Activated CD4-positive, alpha-beta T cell treated with anti-CD3 and anti-CD28 coated beads for 36 hours (primary cell): ENCODE measurements at regions of chr19 and their contacts with region 1.

Region 1: DNA sequence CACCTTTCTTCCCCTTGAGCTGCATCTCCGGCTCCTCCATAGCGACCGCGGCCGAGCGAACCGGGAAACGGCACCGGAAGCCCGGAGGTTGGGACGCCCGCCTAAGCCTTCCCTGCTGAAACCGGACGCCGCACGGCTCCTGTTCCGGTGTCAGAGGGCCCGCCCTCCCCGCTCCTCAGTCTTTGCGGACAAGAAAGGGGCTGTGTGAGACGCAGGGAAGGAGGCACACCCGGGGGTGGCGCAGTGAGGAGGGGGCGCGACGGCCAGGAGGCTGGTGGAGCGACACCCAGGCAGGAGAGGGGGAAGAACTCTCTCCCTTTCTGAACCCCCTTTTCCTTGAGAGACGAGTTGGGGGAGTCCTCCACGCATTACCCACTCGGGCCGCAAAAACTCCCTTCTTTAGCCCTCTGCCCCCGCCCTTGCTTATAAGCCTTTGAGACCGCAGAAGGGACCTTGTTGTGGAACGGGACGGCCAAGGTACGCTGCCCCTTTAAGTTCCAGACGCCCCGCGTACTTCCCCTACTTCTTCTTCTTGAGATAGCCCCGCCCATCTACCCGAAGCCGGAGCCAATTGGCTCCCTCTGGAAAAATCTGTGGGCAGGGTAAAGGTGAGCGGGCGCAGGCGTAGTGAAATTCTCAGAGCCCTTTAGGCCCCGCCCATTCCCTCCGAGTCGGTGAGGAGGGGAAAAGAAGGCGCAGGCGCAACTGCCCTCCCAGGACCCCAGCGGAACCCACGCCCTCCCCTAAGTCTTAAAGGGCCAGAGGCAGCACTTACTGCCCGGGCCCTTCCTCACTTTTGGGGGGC is at the starts of genes BORCS8 and RFXANK:
- DNase-seq: peak; percentile 99
- ATAC-seq: peak; percentile 92
- H3K4me3 Mint-ChIP-seq: peak within 1 kb of the TSS; percentile 91
- H3K27ac Mint-ChIP-seq: peak within 1 kb of the TSS; percentile 94
- H3K4me1 Mint-ChIP-seq: peaks cover 41% of the 10 kb centered on the region
- H3K27me3 Mint-ChIP-seq: no peaks in the 10 kb centered on the region
- total RNA-seq, gene BORCS8: 19.5 to 25.3 TPM
- total RNA-seq, gene RFXANK: 56.2 to 68.5 TPM

Region 2: DNA sequence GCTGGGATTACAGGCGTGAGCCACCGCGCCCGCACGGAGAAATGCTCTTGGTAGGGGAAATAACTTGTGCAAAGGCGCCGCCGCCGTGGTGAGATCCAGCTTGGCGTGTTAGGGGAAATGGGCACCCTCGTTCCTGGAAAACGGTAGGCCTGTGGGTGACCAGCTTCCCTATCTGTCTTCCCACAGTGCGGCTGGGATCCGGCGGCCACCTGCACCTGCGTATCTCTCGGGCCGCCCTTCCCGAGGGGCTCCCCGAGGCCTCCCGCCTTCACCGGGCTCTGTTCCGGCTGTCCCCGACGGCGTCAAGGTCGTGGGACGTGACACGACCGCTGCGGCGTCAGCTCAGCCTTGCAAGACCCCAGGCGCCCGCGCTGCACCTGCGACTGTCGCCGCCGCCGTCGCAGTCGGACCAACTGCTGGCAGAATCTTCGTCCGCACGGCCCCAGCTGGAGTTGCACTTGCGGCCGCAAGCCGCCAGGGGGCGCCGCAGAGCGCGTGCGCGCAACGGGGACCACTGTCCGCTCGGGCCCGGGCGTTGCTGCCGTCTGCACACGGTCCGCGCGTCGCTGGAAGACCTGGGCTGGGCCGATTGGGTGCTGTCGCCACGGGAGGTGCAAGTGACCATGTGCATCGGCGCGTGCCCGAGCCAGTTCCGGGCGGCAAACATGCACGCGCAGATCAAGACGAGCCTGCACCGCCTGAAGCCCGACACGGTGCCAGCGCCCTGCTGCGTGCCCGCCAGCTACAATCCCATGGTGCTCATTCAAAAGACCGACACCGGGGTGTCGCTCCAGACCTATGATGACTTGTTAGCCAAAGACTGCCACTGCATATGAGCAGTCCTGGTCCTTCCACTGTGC is 804.0 kb before region 1 on chr19:
- CTCF ChIA-PET with region 1: no interaction called
- POLR2A ChIA-PET with region 1: interaction called, 10 read pairs
- intact Hi-C with region 1: no loop called
- DNase-seq: peak; percentile 88
- ATAC-seq: peak; percentile 86
- H3K4me3 Mint-ChIP-seq: peak overlapping the region; percentile 67
- H3K27ac Mint-ChIP-seq: no peak overlapping the region
- H3K4me1 Mint-ChIP-seq: peaks cover 4% of the 10 kb centered on the region
- H3K27me3 Mint-ChIP-seq: peaks cover 45% of the 10 kb centered on the region

Region 3: GRCh38 chr19:18795540-18795939 is 396.7 kb before region 1 on chr19:
- CTCF ChIA-PET with region 1: no interaction called
- POLR2A ChIA-PET with region 1: no interaction called
- intact Hi-C with region 1: no loop called
- DNase-seq: no peak
- ATAC-seq: peak; percentile 42
- H3K4me3 Mint-ChIP-seq: no peak overlapping the region
- H3K27ac Mint-ChIP-seq: no peak overlapping the region
- H3K4me1 Mint-ChIP-seq: peaks cover 2% of the 10 kb centered on the region
- H3K27me3 Mint-ChIP-seq: peaks cover 38% of the 10 kb centered on the region

Region 4: GRCh38 chr19:18846862-18847548 is 345.3 kb before region 1 on chr19:
- CTCF ChIA-PET with region 1: no interaction called
- POLR2A ChIA-PET with region 1: no interaction called
- intact Hi-C with region 1: no loop called
- DNase-seq: peak; percentile 84
- ATAC-seq: peak; percentile 63
- H3K4me3 Mint-ChIP-seq: no peak overlapping the region
- H3K27ac Mint-ChIP-seq: no peak overlapping the region
- H3K4me1 Mint-ChIP-seq: peaks cover 61% of the 10 kb centered on the region
- H3K27me3 Mint-ChIP-seq: no peaks in the 10 kb centered on the region

Region 5: DNA sequence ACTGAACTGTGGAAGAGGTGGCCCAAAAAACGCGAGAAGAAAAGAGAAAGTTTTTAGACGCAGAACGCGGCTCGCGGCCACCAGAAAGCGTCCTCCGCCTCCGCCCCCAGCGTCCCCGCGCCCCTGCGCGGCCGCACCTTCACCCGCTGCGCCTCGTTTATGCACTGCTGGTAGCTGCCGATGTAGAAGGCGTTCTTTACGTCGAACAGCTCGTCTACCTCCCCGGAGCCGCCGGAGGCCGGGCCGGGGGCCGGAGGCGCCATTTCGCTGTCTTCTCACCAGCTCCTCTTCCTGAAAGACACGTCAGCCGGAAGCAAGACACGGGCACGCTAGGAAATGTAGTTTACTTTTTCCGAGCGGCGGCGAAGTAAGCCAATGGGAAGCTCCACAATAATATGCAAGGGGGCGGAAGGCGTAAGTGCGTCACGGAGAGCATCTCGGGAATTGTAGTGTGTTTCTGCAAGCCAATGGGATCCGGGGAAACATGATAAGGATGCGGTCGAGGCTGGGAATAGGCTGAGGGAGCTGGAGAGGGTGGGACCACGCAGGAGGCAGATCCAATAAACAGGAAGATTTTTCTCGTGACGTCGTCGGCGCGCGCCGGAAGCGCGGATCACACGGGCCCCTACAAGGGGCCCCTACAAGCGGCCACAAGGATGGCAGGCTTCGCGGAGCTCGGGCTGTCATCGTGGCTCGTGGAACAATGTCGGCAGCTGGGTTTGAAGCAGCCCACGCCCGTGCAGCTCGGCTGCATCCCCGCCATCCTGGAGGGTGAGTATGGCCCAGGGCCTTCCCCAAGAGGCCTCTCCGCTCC is 273.0 kb before region 1 on chr19 and contains the starts of genes COPE and DDX49:
- CTCF ChIA-PET with region 1: no interaction called
- POLR2A ChIA-PET with region 1: no interaction called
- intact Hi-C with region 1: loop called (anchors 1 kb)
- DNase-seq: peak; percentile 98
- ATAC-seq: peak; percentile 98
- H3K4me3 Mint-ChIP-seq: peak within 1 kb of the TSS; percentile 99
- H3K27ac Mint-ChIP-seq: peak within 1 kb of the TSS; percentile 96
- H3K4me1 Mint-ChIP-seq: peaks cover 41% of the 10 kb centered on the region
- H3K27me3 Mint-ChIP-seq: no peaks in the 10 kb centered on the region
- total RNA-seq, gene COPE: 158 to 182 TPM
- total RNA-seq, gene DDX49: 51.4 to 53.4 TPM

Region 6: DNA sequence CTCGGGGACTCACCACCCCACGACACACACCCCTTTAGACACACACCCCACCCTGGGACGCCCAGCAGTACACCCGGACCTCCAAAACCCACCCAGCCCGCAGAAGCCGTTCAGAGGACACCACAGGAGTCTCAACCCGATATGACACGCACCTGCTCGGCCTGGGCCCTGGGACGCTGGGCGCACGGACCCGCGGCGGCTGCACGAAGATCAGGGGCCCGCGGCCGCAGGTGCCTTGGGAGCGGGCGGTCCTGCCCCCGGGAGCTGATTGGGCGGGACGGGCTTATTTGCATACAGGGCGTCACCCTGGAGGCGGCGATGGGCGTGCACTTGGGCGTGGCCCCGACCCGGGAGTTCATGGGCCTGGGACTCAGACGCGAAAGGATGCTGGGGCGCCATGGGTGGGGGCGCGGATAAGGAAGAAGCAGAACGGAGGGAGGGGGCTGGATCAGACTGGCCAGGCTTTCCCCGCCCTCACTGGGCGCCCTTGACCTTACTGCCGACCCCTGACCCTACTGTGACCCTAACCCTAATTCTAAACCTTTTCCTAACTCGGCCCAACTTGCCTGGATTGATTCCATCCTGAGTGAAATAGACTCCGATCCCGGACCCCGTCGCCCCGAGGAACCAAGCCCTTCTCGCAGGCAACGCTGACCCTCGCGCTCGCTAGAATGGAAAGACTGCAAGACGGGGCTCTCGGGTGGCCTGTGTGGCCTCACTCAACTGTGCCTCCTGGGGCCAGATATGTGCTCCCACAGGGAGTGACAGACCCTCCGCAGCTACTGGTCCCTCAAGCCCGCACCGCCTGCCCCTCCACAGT is 22.0 kb before region 1 on chr19 and contains the start of gene MEF2B:
- CTCF ChIA-PET with region 1: interaction called, 15 read pairs
- POLR2A ChIA-PET with region 1: no interaction called
- intact Hi-C with region 1: no loop called
- DNase-seq: peak; percentile 90
- ATAC-seq: peak; percentile 93
- H3K4me3 Mint-ChIP-seq: no peak within 1 kb of the TSS
- H3K27ac Mint-ChIP-seq: no peak within 1 kb of the TSS
- H3K4me1 Mint-ChIP-seq: peaks cover 13% of the 10 kb centered on the region
- H3K27me3 Mint-ChIP-seq: no peaks in the 10 kb centered on the region
- total RNA-seq, gene MEF2B: 1.9 to 2.1 TPM

Region 7: DNA sequence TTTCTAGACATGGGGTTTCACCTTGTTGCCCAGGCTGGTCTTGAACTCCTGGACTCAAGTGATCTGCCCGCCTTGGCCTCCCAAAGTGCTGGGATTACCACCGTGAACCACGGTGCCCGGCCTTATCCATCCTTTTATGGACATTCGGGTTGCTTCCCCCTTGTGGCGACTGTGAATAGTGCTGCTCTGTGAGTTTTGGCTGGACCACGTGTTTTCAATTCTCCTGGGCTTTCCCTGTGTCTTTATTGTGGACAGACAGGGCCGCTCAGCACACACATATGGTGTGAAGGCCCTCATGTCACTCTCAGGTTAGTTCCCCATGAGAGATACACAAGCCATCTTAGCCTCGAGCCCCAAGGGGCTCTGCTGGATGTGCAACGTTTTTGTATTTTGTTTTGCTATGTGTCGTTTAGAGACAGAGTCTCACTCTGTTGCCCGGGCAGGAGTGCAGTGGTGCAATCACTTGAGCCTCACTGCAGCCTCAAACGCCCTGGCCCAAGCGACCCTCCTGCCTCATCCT is 168.9 kb after region 1 on chr19:
- CTCF ChIA-PET with region 1: interaction called, 3 read pairs
- POLR2A ChIA-PET with region 1: no interaction called
- intact Hi-C with region 1: loop called in 1 of 2 experiments (anchors 5 kb)
- DNase-seq: peak; percentile 88
- ATAC-seq: peak; percentile 76
- H3K4me3 Mint-ChIP-seq: no peak overlapping the region
- H3K27ac Mint-ChIP-seq: peak overlapping the region; percentile 31
- H3K4me1 Mint-ChIP-seq: peaks cover 31% of the 10 kb centered on the region
- H3K27me3 Mint-ChIP-seq: no peaks in the 10 kb centered on the region

Region 8: DNA sequence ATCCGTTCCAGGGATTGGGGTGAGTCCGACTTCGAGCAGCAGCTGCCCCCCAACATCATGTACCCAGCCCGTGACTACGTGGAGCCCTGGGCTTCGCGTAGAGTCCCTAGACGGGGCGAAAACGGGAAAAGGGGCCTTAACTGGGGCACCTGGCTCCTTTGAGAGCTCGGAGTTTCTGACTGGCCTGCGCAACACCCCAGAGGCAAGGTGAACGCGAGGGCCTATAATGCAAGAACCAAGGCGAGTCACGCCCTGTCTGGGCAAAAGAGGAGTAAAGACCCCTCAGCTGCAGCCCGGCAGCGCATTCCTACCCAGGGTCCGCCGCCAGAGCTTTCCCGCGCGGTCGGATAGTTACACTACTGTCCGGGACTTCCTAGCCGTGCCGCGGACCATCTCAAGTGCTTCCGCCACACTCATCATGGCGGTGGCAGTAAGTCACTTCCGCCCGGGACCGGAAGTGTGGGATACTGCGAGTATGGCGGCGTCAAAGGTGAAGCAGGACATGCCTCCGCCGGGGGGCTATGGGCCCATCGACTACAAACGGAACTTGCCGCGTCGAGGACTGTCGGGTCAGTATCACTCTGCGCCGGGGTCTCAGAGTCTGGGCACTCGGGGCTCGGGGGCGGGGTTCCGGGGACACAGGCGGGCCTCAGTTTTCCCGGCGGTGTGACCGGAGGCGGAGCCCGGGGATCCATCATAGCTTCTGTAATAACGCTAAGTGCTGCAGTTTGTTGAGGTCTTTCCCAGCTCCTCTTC is 323.7 kb after region 1 on chr19 and contains the start of gene NDUFA13:
- CTCF ChIA-PET with region 1: no interaction called
- POLR2A ChIA-PET with region 1: no interaction called
- intact Hi-C with region 1: loop called in 1 of 2 experiments (anchors 1 kb)
- DNase-seq: peak; percentile 95
- ATAC-seq: peak; percentile 94
- H3K4me3 Mint-ChIP-seq: peak within 1 kb of the TSS; percentile 83
- H3K27ac Mint-ChIP-seq: peak within 1 kb of the TSS; percentile 92
- H3K4me1 Mint-ChIP-seq: peaks cover 25% of the 10 kb centered on the region
- H3K27me3 Mint-ChIP-seq: no peaks in the 10 kb centered on the region
- total RNA-seq, gene NDUFA13: 310 to 323 TPM